Ovary (tissue), 10 donors: ENCODE measurements at regions of chr4 and their contacts with region 1.

Region 1: GRCh38 chr4:76198411-76199237 is 15.0 kb downstream of the SCARB2 start:
- DNase-seq: peak; percentile 62 to 81 (median 71)
- H3K4me3 ChIP-seq: no peak overlapping the region
- H3K27ac ChIP-seq: peak overlapping the region in 1 of 2 donors; percentile 65
- H3K4me1 ChIP-seq: peaks cover 30% of the 10 kb centered on the region
- H3K27me3 ChIP-seq: no peaks in the 10 kb centered on the region
- CTCF ChIP-seq: no peak
- EP300 ChIP-seq: no peak
- POLR2A ChIP-seq: no peak

Region 2: DNA sequence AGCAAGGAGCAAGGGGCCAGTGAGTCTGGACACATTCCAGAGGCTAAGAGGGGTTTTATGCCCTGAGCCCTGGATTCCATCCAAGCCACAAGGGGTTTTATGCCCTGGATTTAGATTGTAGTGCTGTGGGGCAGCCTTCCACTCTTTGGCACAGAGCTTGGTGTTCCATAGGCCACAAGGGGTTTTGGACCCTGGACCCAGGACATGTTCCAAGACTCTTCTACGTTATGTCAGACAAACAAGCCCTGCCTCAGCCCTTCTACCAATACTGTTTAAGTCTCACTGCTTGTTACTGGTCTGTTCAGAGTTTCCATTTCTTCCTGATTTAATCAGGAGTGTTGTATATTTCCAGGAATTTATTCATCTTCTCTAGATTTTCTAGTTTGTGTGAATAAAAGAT is 27.8 kb after region 1 on chr4:
- intact Hi-C with region 1: no loop called
- DNase-seq: no peak
- H3K4me3 ChIP-seq: no peak overlapping the region
- H3K27ac ChIP-seq: no peak overlapping the region
- H3K4me1 ChIP-seq: no peaks in the 10 kb centered on the region
- H3K27me3 ChIP-seq: no peaks in the 10 kb centered on the region
- CTCF ChIP-seq: no peak
- EP300 ChIP-seq: no peak
- POLR2A ChIP-seq: no peak

Region 3: GRCh38 chr4:76305971-76306881 is 107.6 kb after region 1 on chr4 and contains the start of gene STBD1:
- intact Hi-C with region 1: loop called in 1 of 4 experiments (anchors 10 kb)
- DNase-seq: peak; percentile 60 to 80 (median 74)
- H3K4me3 ChIP-seq: peak within 1 kb of the TSS; percentile 58
- H3K27ac ChIP-seq: peak within 1 kb of the TSS; percentile 57 to 84
- H3K4me1 ChIP-seq: peaks cover 8% of the 10 kb centered on the region
- H3K27me3 ChIP-seq: no peaks in the 10 kb centered on the region
- CTCF ChIP-seq: no peak
- EP300 ChIP-seq: no peak
- POLR2A ChIP-seq: no peak
- total RNA-seq, gene STBD1: 2.1 to 7.0 (median 4.6) TPM

Region 4: GRCh38 chr4:76562161-76562560 is 363.5 kb after region 1 on chr4:
- intact Hi-C with region 1: no loop called
- DNase-seq: no peak
- H3K4me3 ChIP-seq: no peak overlapping the region
- H3K27ac ChIP-seq: no peak overlapping the region
- H3K4me1 ChIP-seq: no peaks in the 10 kb centered on the region
- H3K27me3 ChIP-seq: no peaks in the 10 kb centered on the region
- CTCF ChIP-seq: no peak
- EP300 ChIP-seq: no peak
- POLR2A ChIP-seq: no peak